MCF 10A (cell line): ENCODE measurements at regions of chr15 and their contacts with region 1.

Region 1: DNA sequence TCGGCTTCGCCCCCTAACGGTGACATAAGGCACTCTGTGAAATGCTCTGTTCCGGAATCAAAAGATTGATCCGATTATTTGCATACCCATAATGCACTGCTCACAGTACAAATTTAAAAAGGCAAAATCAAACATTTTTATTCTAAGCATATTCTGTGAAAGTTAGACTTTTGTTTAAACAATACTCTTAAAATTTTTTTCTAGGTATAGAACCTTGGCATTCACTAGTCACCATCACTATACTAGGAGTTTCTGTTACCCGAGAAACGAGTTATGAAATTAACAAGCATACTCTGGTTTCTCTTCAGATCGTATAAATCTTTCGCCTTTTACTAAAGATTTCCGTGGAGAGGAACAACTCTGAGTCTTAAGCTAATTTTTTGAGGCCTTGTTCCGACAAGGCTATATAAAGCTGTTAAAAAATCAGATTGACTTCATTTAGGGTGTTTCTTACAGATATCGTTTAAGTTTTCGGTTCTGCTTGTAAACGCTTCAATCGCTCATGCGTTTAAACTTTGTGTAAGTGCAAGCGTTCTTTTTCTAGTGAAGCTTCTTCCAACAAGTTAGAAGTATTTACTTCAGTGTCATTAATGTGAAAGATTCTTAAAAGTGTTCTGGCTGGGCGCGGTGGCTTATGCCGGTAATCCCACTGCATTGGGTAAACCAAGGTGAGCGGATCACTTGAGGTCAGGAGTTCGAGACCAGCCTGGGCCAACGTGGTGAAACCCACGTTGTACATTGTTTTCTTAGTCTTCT is at the start of gene RNU5B-1:
- DNase-seq: peak; percentile 91
- H3K4me3 Mint-ChIP-seq: peak within 1 kb of the TSS; percentile 88
- H3K27ac Mint-ChIP-seq: peak within 1 kb of the TSS; percentile 100
- H3K4me1 Mint-ChIP-seq: no peaks in the 10 kb centered on the region
- H3K27me3 Mint-ChIP-seq: no peaks in the 10 kb centered on the region
- CTCF ChIP-seq: peak; percentile 81
- total RNA-seq, gene RNU5B-1: not detected in 2 replicates

Region 2: GRCh38 chr15:65184868-65185738 is 119.5 kb before region 1 on chr15 and contains the start of gene CLPX:
- CTCF ChIA-PET with region 1: interaction called, 5 read pairs
- POLR2A ChIA-PET with region 1: interaction called, 36 read pairs
- intact Hi-C with region 1: loop called (anchors 2 kb)
- DNase-seq: peak; percentile 94
- H3K4me3 Mint-ChIP-seq: peak within 1 kb of the TSS; percentile 94
- H3K27ac Mint-ChIP-seq: peak within 1 kb of the TSS; percentile 96
- H3K4me1 Mint-ChIP-seq: peaks cover 6% of the 10 kb centered on the region
- H3K27me3 Mint-ChIP-seq: no peaks in the 10 kb centered on the region
- CTCF ChIP-seq: no peak
- total RNA-seq, gene CLPX: 47.9 and 48.9 TPM in 2 replicates

Region 3: GRCh38 chr15:65336493-65337455 is 32.2 kb after region 1 on chr15:
- CTCF ChIA-PET with region 1: no interaction called
- POLR2A ChIA-PET with region 1: no interaction called
- intact Hi-C with region 1: no loop called
- DNase-seq: no peak
- H3K4me3 Mint-ChIP-seq: no peak overlapping the region
- H3K27ac Mint-ChIP-seq: no peak overlapping the region
- H3K4me1 Mint-ChIP-seq: no peaks in the 10 kb centered on the region
- H3K27me3 Mint-ChIP-seq: peaks cover 30% of the 10 kb centered on the region
- CTCF ChIP-seq: no peak

Region 4: GRCh38 chr15:65392368-65392767 is 87.8 kb after region 1 on chr15:
- CTCF ChIA-PET with region 1: no interaction called
- POLR2A ChIA-PET with region 1: no interaction called
- intact Hi-C with region 1: no loop called
- DNase-seq: no peak
- H3K4me3 Mint-ChIP-seq: no peak overlapping the region
- H3K27ac Mint-ChIP-seq: no peak overlapping the region
- H3K4me1 Mint-ChIP-seq: no peaks in the 10 kb centered on the region
- H3K27me3 Mint-ChIP-seq: peaks cover 69% of the 10 kb centered on the region
- CTCF ChIP-seq: no peak